Naive thymus-derived CD4-positive, alpha-beta T cell (primary cell): ENCODE measurements at regions of chr2 and their contacts with region 1.

Region 1: DNA sequence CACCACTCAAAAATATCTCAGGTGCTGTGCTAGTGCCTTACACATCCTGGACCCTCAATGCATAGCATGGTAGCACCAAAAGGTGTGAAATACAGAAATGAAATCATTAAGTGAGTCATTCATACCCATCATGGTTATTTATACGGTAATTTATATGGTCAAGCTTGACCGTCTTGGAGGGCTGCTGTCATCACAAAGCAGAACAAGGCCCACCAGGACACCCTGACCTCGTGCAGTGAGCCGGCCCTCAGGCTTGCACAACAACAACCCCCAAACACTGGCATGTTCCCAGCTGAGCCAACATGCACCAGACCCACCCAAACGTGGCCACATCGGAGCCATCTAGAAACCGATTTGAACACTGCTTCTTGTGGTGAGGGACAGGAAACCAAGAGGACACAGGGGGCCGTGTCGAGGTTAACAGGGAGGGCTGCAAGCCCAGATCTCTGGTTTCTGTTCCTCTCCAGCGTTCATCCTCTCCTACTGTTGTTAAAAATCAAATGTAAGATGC is 378.5 kb upstream of the ID2 start:
- DNase-seq: peak in 8 of 9 donors; percentile 10 to 73 (median 54)
- ATAC-seq: peak; percentile 75
- H3K4me3 ChIP-seq: peak overlapping the region; percentile 34
- H3K4me3 Mint-ChIP-seq: peak overlapping the region in 9 of 10 donors; percentile 3 to 77 (median 50)
- H3K27ac ChIP-seq: no peak overlapping the region
- H3K27ac Mint-ChIP-seq: peak overlapping the region in 6 of 9 donors; percentile 15 to 85 (median 47)
- H3K4me1 ChIP-seq: peaks cover 14 to 53% of the 10 kb centered on the region in 2 donors
- H3K4me1 Mint-ChIP-seq: peaks cover 25 to 88% (median 39%) of the 10 kb centered on the region in 7 donors
- H3K27me3 ChIP-seq: no peaks in the 10 kb centered on the region
- H3K27me3 Mint-ChIP-seq: no peaks in the 10 kb centered on the region

Region 2: DNA sequence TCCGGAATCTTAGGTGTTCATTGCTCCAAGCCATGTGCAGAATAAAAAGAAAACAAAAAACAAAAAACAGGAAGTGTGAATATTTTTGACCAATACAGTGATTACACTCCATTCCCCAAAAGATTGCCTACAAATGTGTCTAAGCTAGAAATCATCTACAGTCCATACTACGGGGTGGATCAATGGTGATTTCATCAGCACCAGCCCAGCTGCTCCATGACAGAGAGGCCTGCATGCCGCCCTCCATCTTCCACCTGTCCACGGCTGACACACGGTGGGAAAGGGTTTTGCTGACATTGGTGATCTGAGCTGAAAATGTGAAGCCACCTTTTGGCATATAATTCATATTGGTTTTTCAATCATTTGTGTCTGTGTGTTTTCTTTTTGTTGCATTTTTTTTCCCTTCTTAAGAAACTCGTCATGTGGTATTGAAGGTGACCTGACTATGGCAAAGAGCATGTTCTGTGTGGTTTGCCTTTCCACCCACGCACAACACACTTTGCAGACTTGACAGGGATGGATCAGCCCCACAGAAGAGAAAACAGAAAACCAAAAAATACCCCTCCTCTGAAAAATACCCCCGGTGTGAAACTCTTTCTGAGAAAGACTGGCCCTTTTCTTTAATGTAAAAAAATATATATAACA is 853.1 kb before region 1 on chr2:
- CTCF ChIA-PET with region 1: no interaction called
- POLR2A ChIA-PET with region 1: no interaction called
- intact Hi-C with region 1: loop called in 1 of 2 experiments (anchors 1 kb)
- DNase-seq: peak in 8 of 9 donors; percentile 66 to 88 (median 72)
- ATAC-seq: peak; percentile 91
- H3K4me3 ChIP-seq: no peak overlapping the region
- H3K4me3 Mint-ChIP-seq: peak overlapping the region; percentile 39 to 87 (median 77)
- H3K27ac ChIP-seq: peak overlapping the region; percentile 60
- H3K27ac Mint-ChIP-seq: peak overlapping the region; percentile 90 to 98 (median 96)
- H3K4me1 ChIP-seq: peaks cover 41 to 65% of the 10 kb centered on the region in 2 donors
- H3K4me1 Mint-ChIP-seq: peaks cover 44 to 93% (median 78%) of the 10 kb centered on the region in 7 donors
- H3K27me3 ChIP-seq: no peaks in the 10 kb centered on the region
- H3K27me3 Mint-ChIP-seq: no peaks in the 10 kb centered on the region

Region 3: GRCh38 chr2:8234757-8235374 is 68.5 kb before region 1 on chr2:
- CTCF ChIA-PET with region 1: no interaction called
- POLR2A ChIA-PET with region 1: no interaction called
- intact Hi-C with region 1: loop called in 1 of 2 experiments (anchors 2 kb)
- DNase-seq: no peak
- ATAC-seq: no peak
- H3K4me3 ChIP-seq: no peak overlapping the region
- H3K4me3 Mint-ChIP-seq: peak overlapping the region in 5 of 10 donors; percentile 17 to 47 (median 29)
- H3K27ac ChIP-seq: no peak overlapping the region
- H3K27ac Mint-ChIP-seq: no peak overlapping the region
- H3K4me1 ChIP-seq: peaks cover 0 to 2% of the 10 kb centered on the region in 2 donors
- H3K4me1 Mint-ChIP-seq: peaks cover 2 to 36% (median 10%) of the 10 kb centered on the region in 7 donors
- H3K27me3 ChIP-seq: no peaks in the 10 kb centered on the region
- H3K27me3 Mint-ChIP-seq: peaks cover 4 to 24% (median 9%) of the 10 kb centered on the region in 5 donors

Region 4: GRCh38 chr2:8268172-8268783 is 35.1 kb before region 1 on chr2:
- CTCF ChIA-PET with region 1: no interaction called
- POLR2A ChIA-PET with region 1: no interaction called
- intact Hi-C with region 1: no loop called
- DNase-seq: no peak
- ATAC-seq: no peak
- H3K4me3 ChIP-seq: no peak overlapping the region
- H3K4me3 Mint-ChIP-seq: no peak overlapping the region
- H3K27ac ChIP-seq: no peak overlapping the region
- H3K27ac Mint-ChIP-seq: no peak overlapping the region
- H3K4me1 ChIP-seq: no peaks in the 10 kb centered on the region
- H3K4me1 Mint-ChIP-seq: peaks cover 0 to 6% (median 0%) of the 10 kb centered on the region in 7 donors
- H3K27me3 ChIP-seq: no peaks in the 10 kb centered on the region
- H3K27me3 Mint-ChIP-seq: peaks cover 0 to 6% (median 0%) of the 10 kb centered on the region in 5 donors

Region 5: GRCh38 chr2:8472545-8473323 is 169.4 kb after region 1 on chr2:
- CTCF ChIA-PET with region 1: no interaction called
- POLR2A ChIA-PET with region 1: no interaction called
- intact Hi-C with region 1: loop called in 1 of 2 experiments (anchors 5 kb)
- DNase-seq: peak in 1 of 9 donors; percentile 8
- ATAC-seq: peak; percentile 36
- H3K4me3 ChIP-seq: peak overlapping the region; percentile 15
- H3K4me3 Mint-ChIP-seq: peak overlapping the region in 9 of 10 donors; percentile 5 to 58 (median 45)
- H3K27ac ChIP-seq: no peak overlapping the region
- H3K27ac Mint-ChIP-seq: peak overlapping the region; percentile 4 to 85 (median 15)
- H3K4me1 ChIP-seq: peaks cover 19 to 64% of the 10 kb centered on the region in 2 donors
- H3K4me1 Mint-ChIP-seq: peaks cover 34 to 86% (median 44%) of the 10 kb centered on the region in 7 donors
- H3K27me3 ChIP-seq: no peaks in the 10 kb centered on the region
- H3K27me3 Mint-ChIP-seq: no peaks in the 10 kb centered on the region

Region 6: GRCh38 chr2:8514796-8515758 is 211.7 kb after region 1 on chr2:
- CTCF ChIA-PET with region 1: no interaction called
- POLR2A ChIA-PET with region 1: no interaction called
- intact Hi-C with region 1: loop called in 1 of 2 experiments (anchors 2 kb)
- DNase-seq: peak in 6 of 9 donors; percentile 11 to 65 (median 28)
- ATAC-seq: peak; percentile 77
- H3K4me3 ChIP-seq: peak overlapping the region; percentile 18
- H3K4me3 Mint-ChIP-seq: peak overlapping the region; percentile 5 to 63 (median 54)
- H3K27ac ChIP-seq: no peak overlapping the region
- H3K27ac Mint-ChIP-seq: peak overlapping the region in 6 of 9 donors; percentile 7 to 88 (median 30)
- H3K4me1 ChIP-seq: peaks cover 7 to 51% of the 10 kb centered on the region in 2 donors
- H3K4me1 Mint-ChIP-seq: peaks cover 15 to 67% (median 21%) of the 10 kb centered on the region in 7 donors
- H3K27me3 ChIP-seq: no peaks in the 10 kb centered on the region
- H3K27me3 Mint-ChIP-seq: peaks cover 0 to 1% (median 0%) of the 10 kb centered on the region in 5 donors